Motor neuron (in vitro differentiated cells): ENCODE measurements at regions of chrX and their contacts with region 1.

Region 1: GRCh38 chrX:140664939-140665338 is 44.6 kb upstream of the LINC00632 start:
- ATAC-seq: peak in 5 of 8 experiments; percentile 24 to 48 (median 38)
- H3K4me3 ChIP-seq: no peak overlapping the region
- H3K27ac ChIP-seq: no peak overlapping the region
- H3K4me1 ChIP-seq: no peaks in the 10 kb centered on the region

Region 2: DNA sequence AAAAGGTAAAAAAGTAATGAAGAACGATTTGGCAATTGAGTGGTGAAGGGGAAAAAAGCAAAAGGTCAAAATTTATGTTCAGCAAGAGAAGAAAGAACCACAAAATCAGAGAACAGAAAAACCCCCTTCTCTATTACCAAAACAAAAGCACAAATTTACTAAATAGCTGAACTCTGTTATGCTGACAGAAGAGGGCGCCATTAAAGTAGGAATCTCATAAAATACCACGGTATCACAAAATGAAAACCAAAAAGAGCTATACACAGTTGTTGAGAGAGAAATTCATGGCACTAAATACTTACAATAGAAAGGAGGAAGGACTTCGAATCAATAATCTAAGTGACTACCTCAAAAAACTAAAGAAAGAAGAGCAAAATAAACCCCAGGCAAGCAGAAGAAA is 630.0 kb before region 1 on chrX:
- in situ Hi-C with region 1: loop called in 3 of 9 experiments (anchors 25 kb)
- ATAC-seq: no peak
- H3K4me3 ChIP-seq: no peak overlapping the region
- H3K27ac ChIP-seq: no peak overlapping the region
- H3K4me1 ChIP-seq: no peaks in the 10 kb centered on the region

Region 3: GRCh38 chrX:140057001-140057411 is 607.9 kb before region 1 on chrX:
- in situ Hi-C with region 1: loop called in 1 of 9 experiments (anchors 25 kb)
- ATAC-seq: peak; percentile 95 to 100 (median 96)
- H3K4me3 ChIP-seq: no peak overlapping the region
- H3K27ac ChIP-seq: no peak overlapping the region
- H3K4me1 ChIP-seq: peaks cover 10 to 15% of the 10 kb centered on the region in 2 donors

Region 4: GRCh38 chrX:140860718-140861117 is 195.8 kb after region 1 on chrX:
- in situ Hi-C with region 1: no loop called
- ATAC-seq: no peak
- H3K4me3 ChIP-seq: no peak overlapping the region
- H3K27ac ChIP-seq: no peak overlapping the region
- H3K4me1 ChIP-seq: no peaks in the 10 kb centered on the region